Dendritic cell treated with granulocyte-macrophage colony-stimulating factor and Interleukin-4, amounts not matched to agents 40 ng/mL and 50 ng/mL, for 4 days (primary cell): ENCODE measurements at regions of chr17 and their contacts with region 1.

Region 1: GRCh38 chr17:10156948-10157607 is 41.3 kb downstream of the GAS7 start:
- H3K4me3 Mint-ChIP-seq: peak overlapping the region; percentile 52
- H3K27ac Mint-ChIP-seq: peak overlapping the region; percentile 95
- H3K4me1 Mint-ChIP-seq: peaks cover 58% of the 10 kb centered on the region
- H3K27me3 Mint-ChIP-seq: no peaks in the 10 kb centered on the region

Region 2: GRCh38 chr17:10059369-10060211 is 97.5 kb before region 1 on chr17:
- intact Hi-C with region 1: loop called (anchors 2 kb)
- H3K4me3 Mint-ChIP-seq: no peak overlapping the region
- H3K27ac Mint-ChIP-seq: peak overlapping the region; percentile 67
- H3K4me1 Mint-ChIP-seq: peaks cover 63% of the 10 kb centered on the region
- H3K27me3 Mint-ChIP-seq: peaks cover 5% of the 10 kb centered on the region

Region 3: DNA sequence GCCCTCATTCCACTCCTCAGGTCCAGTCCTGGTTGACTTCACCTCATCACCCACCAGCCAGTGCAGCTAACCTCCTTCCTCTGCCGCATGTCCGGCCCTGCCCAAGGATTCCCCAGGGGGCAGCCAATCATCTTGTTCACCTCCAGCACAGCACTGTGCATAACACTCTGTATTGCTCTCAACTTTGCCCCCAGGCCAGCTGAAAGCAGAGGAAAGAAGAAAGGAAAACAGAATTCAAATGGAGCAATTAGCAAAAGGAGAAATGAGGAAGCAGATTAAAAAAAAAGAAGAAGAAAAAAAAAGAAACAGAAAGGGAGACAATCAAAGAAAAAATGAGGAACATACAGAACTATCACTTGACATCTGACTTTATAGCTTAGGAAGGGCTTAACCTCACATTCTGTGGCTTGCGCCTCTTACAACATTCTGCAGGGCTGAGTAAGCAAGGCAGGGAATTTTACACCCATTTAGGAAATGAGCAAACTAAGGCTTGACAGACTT is 15.2 kb after region 1 on chr17:
- intact Hi-C with region 1: loop called (anchors 2 kb)
- H3K4me3 Mint-ChIP-seq: peak overlapping the region; percentile 61
- H3K27ac Mint-ChIP-seq: peak overlapping the region; percentile 86
- H3K4me1 Mint-ChIP-seq: peaks cover 85% of the 10 kb centered on the region
- H3K27me3 Mint-ChIP-seq: no peaks in the 10 kb centered on the region

Region 4: GRCh38 chr17:10372906-10373305 is 215.8 kb after region 1 on chr17 and contains the start of gene MYH13:
- intact Hi-C with region 1: no loop called
- H3K4me3 Mint-ChIP-seq: no peak within 1 kb of the TSS
- H3K27ac Mint-ChIP-seq: no peak within 1 kb of the TSS
- H3K4me1 Mint-ChIP-seq: no peaks in the 10 kb centered on the region
- H3K27me3 Mint-ChIP-seq: peaks cover 9% of the 10 kb centered on the region

Region 5: DNA sequence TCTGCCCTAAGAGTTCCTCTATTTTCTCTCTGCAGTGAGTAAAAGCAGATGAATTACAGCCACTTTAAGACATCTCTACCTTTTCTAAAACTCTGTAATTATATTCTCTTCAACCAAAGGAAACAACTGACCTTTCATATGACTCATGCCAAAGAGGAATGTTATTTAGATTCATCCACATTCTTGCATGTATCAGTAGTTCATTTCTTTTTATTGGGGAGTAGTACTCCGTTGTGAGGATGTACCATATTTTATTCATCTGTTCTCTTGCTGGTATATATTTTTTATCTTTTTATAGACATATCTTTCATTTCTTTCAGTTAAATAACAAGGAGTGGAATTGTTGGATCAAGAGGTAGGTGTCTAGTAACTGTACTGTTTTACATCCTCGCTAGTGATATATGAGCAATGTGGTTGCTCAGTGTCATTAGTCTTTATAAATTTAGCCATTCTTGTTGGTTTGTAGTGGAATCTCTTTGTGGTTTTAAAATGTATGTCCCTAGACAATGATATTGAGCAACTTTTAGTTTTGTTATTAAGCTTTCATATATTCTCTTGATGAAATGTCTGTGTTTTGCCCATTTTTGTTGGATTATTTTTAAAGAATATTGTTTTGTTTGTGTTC is 272.5 kb after region 1 on chr17:
- intact Hi-C with region 1: no loop called
- H3K4me3 Mint-ChIP-seq: no peak overlapping the region
- H3K27ac Mint-ChIP-seq: no peak overlapping the region
- H3K4me1 Mint-ChIP-seq: no peaks in the 10 kb centered on the region
- H3K27me3 Mint-ChIP-seq: peaks cover 5% of the 10 kb centered on the region